ENCODE measurements at regions of chr15 and their contacts with region 1.

Region 1: GRCh38 chr15:65192016-65192415 is 6.9 kb upstream of the CLPX start:
- DNase-seq: peak in 2 of 4 experiments; percentile 22 to 62
- ATAC-seq: peak; percentile 67
- H3K4me3 ChIP-seq: no peak overlapping the region
- H3K27ac ChIP-seq: no peak overlapping the region
- H3K4me1 ChIP-seq: peaks cover 2 to 6% of the 10 kb centered on the region in 2 experiments; a peak in 2 of 5 replicates
- H3K27me3 ChIP-seq: peaks cover 0 to 4% of the 10 kb centered on the region in 2 experiments; a peak in 2 of 5 replicates
- CTCF ChIP-seq: no peak
- EP300 ChIP-seq: no peak
- POLR2A ChIP-seq: no peak
- RAD21 ChIP-seq: no peak

Region 2: DNA sequence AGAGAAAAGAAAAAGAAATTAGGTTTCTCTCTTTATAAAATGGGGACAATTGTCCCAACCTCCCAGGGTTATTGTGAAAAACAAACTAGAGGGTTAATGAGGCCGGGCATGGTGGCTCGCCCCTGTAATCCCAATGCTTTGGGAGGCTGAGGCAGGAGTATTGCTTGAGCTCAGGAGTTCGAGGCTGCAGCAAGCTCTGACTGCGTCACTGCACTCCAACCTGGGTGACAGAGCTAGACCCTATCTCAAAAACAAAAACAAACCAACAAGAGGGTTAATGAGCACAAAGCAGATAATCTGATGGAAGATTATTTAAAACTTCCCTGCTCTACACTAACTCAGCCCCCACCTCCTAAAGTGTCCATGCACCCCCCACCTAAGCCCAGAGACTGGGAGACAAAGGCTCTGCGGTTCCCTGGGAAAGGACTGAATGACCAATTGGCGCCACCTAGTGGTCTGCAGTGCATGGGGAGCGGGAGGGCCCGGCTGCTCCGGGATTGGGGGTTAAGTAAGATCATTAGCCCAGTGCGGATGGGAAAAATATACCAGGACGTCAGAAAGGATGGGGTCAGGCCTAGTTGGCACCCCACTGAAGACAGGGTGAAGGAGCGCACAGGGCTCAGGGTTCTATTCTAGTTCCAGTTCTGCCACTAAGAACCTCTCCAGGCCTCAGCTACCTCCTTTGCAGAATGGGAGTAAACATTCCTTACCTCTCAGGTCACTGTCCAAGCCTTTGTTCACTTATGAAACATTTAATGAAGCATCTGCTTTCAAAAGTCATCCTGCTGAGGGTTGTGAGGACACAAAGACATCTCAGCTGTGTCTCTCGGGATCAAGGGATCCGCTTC is 382.1 kb before region 1 on chr15:
- CTCF ChIA-PET with region 1: no interaction called
- POLR2A ChIA-PET with region 1: no interaction called
- in situ Hi-C with region 1: no loop called
- intact Hi-C with region 1: no loop called
- DNase-seq: peak; percentile 84 to 90 (median 88)
- ATAC-seq: peak; percentile 91
- H3K4me3 ChIP-seq: no peak overlapping the region
- H3K27ac ChIP-seq: no peak overlapping the region
- H3K4me1 ChIP-seq: peaks cover 13% of the 10 kb centered on the region in 2 experiments
- H3K27me3 ChIP-seq: peaks cover 3 to 7% of the 10 kb centered on the region in 2 experiments; a peak in 2 of 5 replicates
- CTCF ChIP-seq: peak; percentile 91 to 96 (median 93)
- EP300 ChIP-seq: no peak
- POLR2A ChIP-seq: no peak
- RAD21 ChIP-seq: peak; percentile 75 to 90

Region 3: DNA sequence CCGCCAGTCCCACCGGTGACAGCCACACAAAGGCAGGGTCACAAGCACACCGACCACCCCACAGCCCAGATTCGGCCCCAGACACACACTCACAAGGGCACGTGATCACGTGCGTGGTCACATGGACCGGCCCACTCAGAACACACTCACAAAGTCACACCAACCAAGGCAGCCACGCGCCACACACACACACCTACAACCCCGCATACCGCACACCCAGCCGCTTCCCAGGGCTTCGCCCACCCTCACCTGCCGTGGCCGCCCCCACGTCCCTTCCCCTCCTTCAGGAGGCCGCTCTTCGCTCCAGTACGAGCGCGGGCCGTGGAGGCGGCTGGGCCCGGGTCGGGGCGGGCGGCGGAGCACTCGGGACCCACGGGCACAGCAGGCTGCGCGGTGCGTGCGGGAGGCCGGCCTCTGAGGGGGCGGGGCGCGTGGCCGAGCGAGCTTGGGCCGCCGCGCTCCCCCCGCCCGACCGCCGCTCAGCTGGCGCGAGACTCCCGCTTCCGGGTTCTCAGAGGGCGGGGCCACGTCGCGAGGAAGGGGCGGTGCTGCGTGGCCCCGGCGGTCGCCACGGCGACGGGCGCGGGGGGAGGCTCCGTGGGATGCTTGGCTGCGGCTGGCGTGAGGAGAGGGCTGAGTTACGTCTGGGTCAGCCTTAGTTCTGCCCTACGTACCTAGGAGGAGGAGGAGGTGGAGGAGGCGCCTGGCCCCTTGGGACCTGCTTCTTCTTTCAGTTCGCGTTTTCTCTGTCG is 202.4 kb before region 1 on chr15 and contains the start of gene SPG21:
- CTCF ChIA-PET with region 1: no interaction called
- POLR2A ChIA-PET with region 1: no interaction called
- in situ Hi-C with region 1: no loop called
- intact Hi-C with region 1: no loop called
- DNase-seq: peak; percentile 97 to 98 (median 98)
- ATAC-seq: peak; percentile 98
- H3K4me3 ChIP-seq: peak within 1 kb of the TSS; percentile 83
- H3K27ac ChIP-seq: peak within 1 kb of the TSS; percentile 85
- H3K4me1 ChIP-seq: peaks cover 5 to 14% of the 10 kb centered on the region in 2 experiments; a peak in 4 of 5 replicates
- H3K27me3 ChIP-seq: no peaks in the 10 kb centered on the region
- CTCF ChIP-seq: no peak
- EP300 ChIP-seq: no peak
- POLR2A ChIP-seq: peak; percentile 80
- RAD21 ChIP-seq: no peak
- polyA plus RNA-seq, gene SPG21: 22.8 to 23.6 TPM

Region 4: GRCh38 chr15:65204931-65205630 is 13.1 kb after region 1 on chr15:
- CTCF ChIA-PET with region 1: no interaction called
- POLR2A ChIA-PET with region 1: no interaction called
- in situ Hi-C with region 1: no loop called
- intact Hi-C with region 1: no loop called
- DNase-seq: no peak
- ATAC-seq: no peak
- H3K4me3 ChIP-seq: no peak overlapping the region
- H3K27ac ChIP-seq: no peak overlapping the region
- H3K4me1 ChIP-seq: peaks cover 0 to 8% of the 10 kb centered on the region in 2 experiments; a peak in 1 of 5 replicates
- H3K27me3 ChIP-seq: peaks cover 20 to 43% of the 10 kb centered on the region in 2 experiments
- CTCF ChIP-seq: no peak
- EP300 ChIP-seq: no peak
- POLR2A ChIP-seq: no peak
- RAD21 ChIP-seq: no peak

Region 5: DNA sequence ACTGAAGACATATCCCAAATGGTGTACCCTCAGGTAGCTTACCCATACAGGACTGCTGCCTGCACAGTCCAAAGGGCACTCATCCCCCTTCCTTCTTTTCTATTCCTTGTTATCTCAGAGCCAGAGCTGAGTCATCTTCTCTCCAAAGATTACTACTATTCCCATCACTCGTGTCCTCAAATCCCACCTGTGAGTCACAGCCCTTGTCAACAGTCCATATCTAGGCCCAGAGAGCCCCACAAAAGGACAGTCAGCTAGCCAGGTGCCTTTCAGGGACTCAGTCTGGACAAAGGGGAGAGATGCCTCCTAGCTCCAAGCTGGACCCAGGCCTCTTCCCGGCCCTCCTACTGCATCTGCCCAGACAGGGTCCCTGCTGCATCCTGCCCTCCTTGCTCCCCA is 83.7 kb after region 1 on chr15:
- CTCF ChIA-PET with region 1: interaction called, 24 read pairs
- POLR2A ChIA-PET with region 1: interaction called, 3 read pairs
- in situ Hi-C with region 1: loop called (anchors 5 kb)
- intact Hi-C with region 1: loop called (anchors 1 kb)
- DNase-seq: peak; percentile 37 to 48 (median 42)
- ATAC-seq: no peak; the same call in 2 of the 3 replicates
- H3K4me3 ChIP-seq: no peak overlapping the region
- H3K27ac ChIP-seq: no peak overlapping the region
- H3K4me1 ChIP-seq: peaks cover 4 to 11% of the 10 kb centered on the region in 2 experiments; a peak in 4 of 5 replicates
- H3K27me3 ChIP-seq: no peaks in the 10 kb centered on the region
- CTCF ChIP-seq: no peak
- EP300 ChIP-seq: peak; percentile 63
- POLR2A ChIP-seq: no peak
- RAD21 ChIP-seq: no peak

Region 6: GRCh38 chr15:65384895-65385858 is 193.2 kb after region 1 on chr15:
- CTCF ChIA-PET with region 1: interaction called, 10 read pairs
- POLR2A ChIA-PET with region 1: no interaction called
- in situ Hi-C with region 1: loop called (anchors 5 kb)
- intact Hi-C with region 1: loop called (anchors 1 kb)
- DNase-seq: peak; percentile 88 to 91 (median 90)
- ATAC-seq: peak; percentile 96
- H3K4me3 ChIP-seq: peak overlapping the region; percentile 20; the same call in 1 of the 2 replicates
- H3K27ac ChIP-seq: no peak overlapping the region
- H3K4me1 ChIP-seq: peaks cover 6 to 15% of the 10 kb centered on the region in 2 experiments; a peak in 4 of 5 replicates
- H3K27me3 ChIP-seq: peaks cover 48 to 66% of the 10 kb centered on the region in 2 experiments; a peak in 4 of 5 replicates
- CTCF ChIP-seq: peak; percentile 93 to 97 (median 96)
- EP300 ChIP-seq: no peak
- POLR2A ChIP-seq: no peak
- RAD21 ChIP-seq: peak; percentile 86 to 96